GM12878 (cell line): ENCODE measurements at regions of chr10 and their contacts with region 1.

Region 1: GRCh38 chr10:48363617-48364355 is 57.3 kb downstream of the MAPK8 start:
- DNase-seq: peak; percentile 51
- ATAC-seq: peak; percentile 91
- H3K4me3 ChIP-seq: no peak overlapping the region
- H3K27ac ChIP-seq: no peak overlapping the region
- H3K4me1 ChIP-seq: no peaks in the 10 kb centered on the region
- H3K27me3 ChIP-seq: no peaks in the 10 kb centered on the region
- CTCF ChIP-seq: peak; percentile 55 to 83 (median 74)
- EP300 ChIP-seq: no peak
- POLR2A ChIP-seq: no peak
- RAD21 ChIP-seq: peak; percentile 93

Region 2: GRCh38 chr10:48243487-48243886 is 120.3 kb before region 1 on chr10:
- CTCF ChIA-PET with region 1: no interaction called
- POLR2A ChIA-PET with region 1: no interaction called
- RAD21 ChIA-PET with region 1: no interaction called
- SMC1A ChIA-PET with region 1: no interaction called
- in situ Hi-C with region 1: no loop called
- intact Hi-C with region 1: no loop called
- DNase-seq: no peak
- ATAC-seq: no peak
- H3K4me3 ChIP-seq: no peak overlapping the region
- H3K27ac ChIP-seq: no peak overlapping the region
- H3K4me1 ChIP-seq: peaks cover 3% of the 10 kb centered on the region; the same call in 1 of the 2 replicates
- H3K27me3 ChIP-seq: no peaks in the 10 kb centered on the region
- CTCF ChIP-seq: no peak
- EP300 ChIP-seq: no peak
- POLR2A ChIP-seq: no peak
- RAD21 ChIP-seq: no peak

Region 3: DNA sequence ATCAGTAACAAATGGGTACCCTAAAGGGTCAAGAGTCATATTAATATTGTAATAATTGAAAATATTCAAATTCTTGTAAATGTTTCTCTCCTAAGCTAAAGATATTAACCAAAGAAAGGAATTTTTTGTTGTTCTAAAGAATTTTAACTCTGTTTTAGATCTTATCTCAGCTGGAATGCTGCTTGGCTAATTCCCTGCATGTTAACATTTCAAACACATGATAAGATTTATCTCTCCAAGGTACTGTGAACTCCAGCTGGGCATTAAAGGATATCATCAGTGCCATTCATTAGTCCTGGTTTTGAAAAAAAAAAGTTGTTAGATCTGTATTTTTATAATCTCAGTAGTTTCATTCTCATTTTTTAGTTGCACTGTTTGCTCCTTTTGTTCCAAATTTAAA is 19.6 kb after region 1 on chr10:
- CTCF ChIA-PET with region 1: interaction called, 26 read pairs
- POLR2A ChIA-PET with region 1: no interaction called
- RAD21 ChIA-PET with region 1: interaction called, 9 read pairs
- SMC1A ChIA-PET with region 1: interaction called, 12 read pairs
- in situ Hi-C with region 1: no loop called
- intact Hi-C with region 1: no loop called
- DNase-seq: no peak
- ATAC-seq: no peak
- H3K4me3 ChIP-seq: no peak overlapping the region
- H3K27ac ChIP-seq: no peak overlapping the region
- H3K4me1 ChIP-seq: no peaks in the 10 kb centered on the region
- H3K27me3 ChIP-seq: no peaks in the 10 kb centered on the region
- CTCF ChIP-seq: no peak
- EP300 ChIP-seq: no peak
- POLR2A ChIP-seq: no peak
- RAD21 ChIP-seq: no peak

Region 4: DNA sequence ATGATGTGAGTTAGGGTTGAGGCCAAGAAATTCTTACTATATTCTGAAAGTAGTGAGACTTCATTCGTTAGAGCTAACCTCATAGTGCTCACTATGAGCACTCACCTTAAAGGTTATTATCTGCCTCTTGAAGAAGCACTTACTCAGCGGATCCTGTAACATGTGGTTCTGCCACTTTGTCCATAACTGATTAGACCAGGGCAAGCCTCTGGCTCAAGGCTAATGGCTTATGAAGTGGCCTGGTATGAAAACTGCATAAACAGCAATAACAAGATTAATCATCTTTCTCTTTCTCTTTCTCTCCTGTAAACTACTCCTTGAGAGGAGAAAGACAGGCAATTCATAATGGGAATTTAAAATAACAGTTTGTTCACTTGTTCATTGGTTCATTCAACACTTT is 25.5 kb after region 1 on chr10:
- CTCF ChIA-PET with region 1: interaction called, 26 read pairs
- POLR2A ChIA-PET with region 1: no interaction called
- RAD21 ChIA-PET with region 1: interaction called, 6 read pairs
- SMC1A ChIA-PET with region 1: interaction called, 8 read pairs
- in situ Hi-C with region 1: no loop called
- intact Hi-C with region 1: no loop called
- DNase-seq: no peak
- ATAC-seq: peak; percentile 53
- H3K4me3 ChIP-seq: no peak overlapping the region
- H3K27ac ChIP-seq: no peak overlapping the region
- H3K4me1 ChIP-seq: peaks cover 6% of the 10 kb centered on the region; the same call in 1 of the 2 replicates
- H3K27me3 ChIP-seq: no peaks in the 10 kb centered on the region
- CTCF ChIP-seq: no peak
- EP300 ChIP-seq: no peak
- POLR2A ChIP-seq: no peak
- RAD21 ChIP-seq: no peak

Region 5: GRCh38 chr10:48429309-48429708 is 65.5 kb after region 1 on chr10:
- CTCF ChIA-PET with region 1: interaction called, 3 read pairs
- POLR2A ChIA-PET with region 1: no interaction called
- RAD21 ChIA-PET with region 1: no interaction called
- SMC1A ChIA-PET with region 1: interaction called, 3 read pairs
- in situ Hi-C with region 1: no loop called
- intact Hi-C with region 1: loop called (anchors 5 kb)
- DNase-seq: no peak
- ATAC-seq: no peak
- H3K4me3 ChIP-seq: no peak overlapping the region
- H3K27ac ChIP-seq: no peak overlapping the region
- H3K4me1 ChIP-seq: no peaks in the 10 kb centered on the region
- H3K27me3 ChIP-seq: no peaks in the 10 kb centered on the region
- CTCF ChIP-seq: no peak
- EP300 ChIP-seq: no peak
- POLR2A ChIP-seq: no peak
- RAD21 ChIP-seq: no peak

Region 6: DNA sequence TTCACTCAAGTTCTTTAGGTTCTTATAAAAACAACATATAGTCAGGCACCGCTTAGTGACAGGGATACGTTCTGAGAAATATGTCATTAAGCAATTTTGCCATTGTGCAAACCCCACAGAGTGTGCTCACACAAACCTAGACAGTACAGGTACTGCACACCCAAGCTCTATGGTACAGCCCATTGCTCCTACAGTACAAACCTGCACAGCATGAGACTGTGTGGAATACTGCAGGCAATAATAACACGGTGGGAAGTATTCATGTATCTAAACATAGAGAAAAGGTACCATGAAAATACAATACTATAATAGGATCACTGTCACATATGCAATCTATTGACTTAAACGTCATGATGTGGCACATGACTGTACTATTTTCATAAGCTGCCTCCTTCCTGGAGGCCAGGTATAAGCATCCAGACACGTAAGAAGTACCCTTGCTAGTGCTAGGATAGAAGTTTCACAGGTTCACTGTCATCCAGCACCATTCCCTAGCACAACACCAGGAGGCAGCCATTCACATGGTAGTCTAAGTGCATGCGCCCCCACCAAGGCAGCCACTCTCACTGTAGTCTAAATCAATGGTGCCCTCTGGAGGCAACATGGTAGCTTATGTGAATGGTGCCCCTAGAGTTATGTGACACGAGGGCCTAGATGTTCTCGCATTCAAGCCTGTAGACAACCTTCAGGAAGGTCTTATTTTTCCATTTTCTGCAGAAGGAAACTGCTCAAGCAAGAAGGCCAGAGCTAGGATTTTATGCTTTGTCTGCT is 142.5 kb after region 1 on chr10:
- CTCF ChIA-PET with region 1: interaction called, 50 read pairs
- POLR2A ChIA-PET with region 1: no interaction called
- RAD21 ChIA-PET with region 1: interaction called, 11 read pairs
- SMC1A ChIA-PET with region 1: interaction called, 11 read pairs
- in situ Hi-C with region 1: loop called (anchors 5 kb)
- intact Hi-C with region 1: loop called (anchors 1 kb)
- DNase-seq: no peak
- ATAC-seq: peak; percentile 60
- H3K4me3 ChIP-seq: no peak overlapping the region
- H3K27ac ChIP-seq: no peak overlapping the region
- H3K4me1 ChIP-seq: peaks cover 6% of the 10 kb centered on the region
- H3K27me3 ChIP-seq: no peaks in the 10 kb centered on the region
- CTCF ChIP-seq: peak; percentile 35 to 55 (median 54); a peak in 5 of 6 replicates
- EP300 ChIP-seq: no peak
- POLR2A ChIP-seq: no peak
- RAD21 ChIP-seq: peak; percentile 68

Region 7: GRCh38 chr10:48551861-48552591 is 188.2 kb after region 1 on chr10:
- CTCF ChIA-PET with region 1: interaction called, 15 read pairs
- POLR2A ChIA-PET with region 1: no interaction called
- RAD21 ChIA-PET with region 1: interaction called, 6 read pairs
- SMC1A ChIA-PET with region 1: interaction called, 7 read pairs
- in situ Hi-C with region 1: loop called (anchors 5 kb)
- intact Hi-C with region 1: loop called (anchors 1 kb)
- DNase-seq: no peak
- ATAC-seq: peak; percentile 93
- H3K4me3 ChIP-seq: no peak overlapping the region
- H3K27ac ChIP-seq: no peak overlapping the region
- H3K4me1 ChIP-seq: no peaks in the 10 kb centered on the region
- H3K27me3 ChIP-seq: no peaks in the 10 kb centered on the region; a peak in 1 of 4 replicates
- CTCF ChIP-seq: peak; percentile 60 to 84 (median 78)
- EP300 ChIP-seq: no peak
- POLR2A ChIP-seq: no peak
- RAD21 ChIP-seq: peak; percentile 80